CD4-positive, alpha-beta memory T cell (primary cell): ENCODE measurements at regions of chr12 and their contacts with region 1.

Region 1: GRCh38 chr12:6607751-6608591 is 792 bp upstream of the CHD4 start:
- DNase-seq: peak; percentile 74 to 90 (median 79)
- H3K4me3 ChIP-seq: no peak overlapping the region
- H3K4me3 Mint-ChIP-seq: no peak overlapping the region
- H3K27ac ChIP-seq: peak overlapping the region; percentile 84
- H3K27ac Mint-ChIP-seq: no peak overlapping the region
- H3K4me1 ChIP-seq: peaks cover 58% of the 10 kb centered on the region
- H3K4me1 Mint-ChIP-seq: peaks cover 41 to 55% (median 47%) of the 10 kb centered on the region in 4 donors
- H3K27me3 ChIP-seq: no peaks in the 10 kb centered on the region
- H3K27me3 Mint-ChIP-seq: no peaks in the 10 kb centered on the region

Region 2: DNA sequence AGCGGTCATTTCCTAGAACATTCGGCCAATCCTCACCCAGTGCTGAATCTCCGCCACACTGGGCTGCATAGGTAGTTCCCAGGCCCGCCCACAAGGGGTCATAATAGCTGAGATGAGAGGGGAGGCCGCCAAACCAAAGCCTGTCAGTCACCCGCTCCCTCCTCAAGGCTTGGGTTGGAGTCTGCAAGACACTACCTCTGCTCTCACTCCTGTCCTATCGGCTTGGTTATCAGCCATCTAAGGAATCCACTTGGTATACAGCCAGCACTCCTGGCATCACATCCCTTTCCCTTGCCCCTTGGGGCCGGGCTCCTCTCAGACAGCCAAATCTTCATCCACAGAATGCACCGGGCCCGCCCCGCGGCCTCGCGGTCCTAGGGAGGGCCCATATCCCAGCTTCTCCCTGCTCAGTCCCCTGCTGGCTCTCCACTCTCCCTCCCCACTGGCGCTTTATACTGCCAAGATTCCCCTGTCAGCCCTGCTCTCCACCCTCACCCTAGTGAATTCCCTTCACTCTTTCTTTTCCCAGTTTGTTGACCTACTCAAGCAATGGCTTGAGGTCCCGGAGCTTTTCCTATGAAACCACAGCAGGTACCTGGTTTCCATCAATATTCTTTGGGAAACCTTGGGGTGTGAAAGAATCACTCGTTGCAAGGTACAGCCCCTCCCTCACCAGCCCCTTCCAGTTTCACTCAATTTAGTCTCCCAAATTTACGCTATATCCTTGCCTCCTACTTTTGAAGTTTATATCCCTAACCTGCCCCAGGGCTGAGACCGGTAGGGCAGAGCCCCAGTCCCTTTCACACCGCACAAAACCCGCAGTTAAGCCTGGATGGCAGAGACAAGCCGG is 53.6 kb before region 1 on chr12:
- CTCF ChIA-PET with region 1: interaction called, 9 read pairs
- POLR2A ChIA-PET with region 1: interaction called, 7 read pairs
- intact Hi-C with region 1: loop called (anchors 1 kb)
- DNase-seq: peak; percentile 60 to 79 (median 63)
- H3K4me3 ChIP-seq: peak overlapping the region; percentile 71 to 73
- H3K4me3 Mint-ChIP-seq: peak overlapping the region; percentile 81 to 96 (median 88)
- H3K27ac ChIP-seq: peak overlapping the region; percentile 48
- H3K27ac Mint-ChIP-seq: peak overlapping the region; percentile 14 to 89 (median 70)
- H3K4me1 ChIP-seq: peaks cover 57% of the 10 kb centered on the region
- H3K4me1 Mint-ChIP-seq: peaks cover 28 to 64% (median 45%) of the 10 kb centered on the region in 4 donors
- H3K27me3 ChIP-seq: no peaks in the 10 kb centered on the region
- H3K27me3 Mint-ChIP-seq: no peaks in the 10 kb centered on the region

Region 3: DNA sequence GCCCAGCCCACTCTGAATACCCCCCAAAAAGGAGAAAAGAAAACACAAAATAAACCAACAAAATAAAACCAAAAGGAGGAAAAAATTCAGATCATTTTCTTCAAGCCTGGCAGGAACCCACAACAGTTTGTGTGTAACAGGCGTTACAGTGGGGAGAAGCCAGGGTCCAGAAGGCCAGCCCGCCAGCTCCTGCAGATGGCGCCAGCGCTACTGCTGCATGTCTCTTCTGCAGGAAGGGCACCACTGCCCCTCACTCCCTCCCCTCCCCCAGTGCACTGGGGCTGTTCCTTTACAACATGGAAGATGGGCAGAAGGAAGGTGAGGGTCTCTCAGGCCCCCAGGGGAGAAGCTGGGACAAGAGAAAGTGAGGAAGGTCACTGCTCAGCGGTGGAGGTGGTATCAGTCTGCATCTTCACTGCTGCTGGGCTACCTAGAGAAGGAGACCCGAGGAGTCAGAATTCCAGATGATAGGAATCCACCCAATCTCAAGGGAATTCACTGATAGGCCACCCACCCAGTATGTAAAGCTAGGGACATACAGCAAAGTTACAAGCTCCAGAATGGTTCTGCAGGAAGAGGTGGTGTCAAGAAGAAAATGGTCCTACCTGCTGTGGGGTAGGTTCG is 37.6 kb before region 1 on chr12:
- CTCF ChIA-PET with region 1: interaction called, 7 read pairs
- POLR2A ChIA-PET with region 1: interaction called, 14 read pairs
- intact Hi-C with region 1: loop called (anchors 2 kb)
- DNase-seq: peak in 3 of 5 donors; percentile 20 to 29 (median 25)
- H3K4me3 ChIP-seq: no peak overlapping the region
- H3K4me3 Mint-ChIP-seq: peak overlapping the region in 5 of 8 donors; percentile 10 to 100 (median 61)
- H3K27ac ChIP-seq: no peak overlapping the region
- H3K27ac Mint-ChIP-seq: peak overlapping the region; percentile 67 to 100 (median 75)
- H3K4me1 ChIP-seq: peaks cover 42% of the 10 kb centered on the region
- H3K4me1 Mint-ChIP-seq: peaks cover 17 to 51% (median 33%) of the 10 kb centered on the region in 4 donors
- H3K27me3 ChIP-seq: no peaks in the 10 kb centered on the region
- H3K27me3 Mint-ChIP-seq: no peaks in the 10 kb centered on the region

Region 4: GRCh38 chr12:6620137-6620884 is 12.3 kb after region 1 on chr12:
- CTCF ChIA-PET with region 1: interaction called, 9 read pairs
- POLR2A ChIA-PET with region 1: interaction called, 24 read pairs
- intact Hi-C with region 1: loop called (anchors 1 kb)
- DNase-seq: peak in 2 of 5 donors; percentile 36 to 49
- H3K4me3 ChIP-seq: peak overlapping the region in 1 of 2 donors; percentile 28
- H3K4me3 Mint-ChIP-seq: peak overlapping the region in 3 of 8 donors; percentile 54 to 78 (median 59)
- H3K27ac ChIP-seq: no peak overlapping the region
- H3K27ac Mint-ChIP-seq: peak overlapping the region in 1 of 7 donors; percentile 36
- H3K4me1 ChIP-seq: no peaks in the 10 kb centered on the region
- H3K4me1 Mint-ChIP-seq: peaks cover 3 to 24% (median 7%) of the 10 kb centered on the region in 4 donors
- H3K27me3 ChIP-seq: no peaks in the 10 kb centered on the region
- H3K27me3 Mint-ChIP-seq: no peaks in the 10 kb centered on the region

Region 5: GRCh38 chr12:6723607-6724396 is 115.8 kb after region 1 on chr12 and contains the start of gene COPS7A:
- CTCF ChIA-PET with region 1: interaction called, 3 read pairs
- POLR2A ChIA-PET with region 1: interaction called, 27 read pairs
- intact Hi-C with region 1: no loop called
- DNase-seq: peak; percentile 93 to 97 (median 96)
- H3K4me3 ChIP-seq: peak within 1 kb of the TSS; percentile 40 to 64
- H3K4me3 Mint-ChIP-seq: peak within 1 kb of the TSS; percentile 88 to 98 (median 94)
- H3K27ac ChIP-seq: peak within 1 kb of the TSS; percentile 68
- H3K27ac Mint-ChIP-seq: peak within 1 kb of the TSS; percentile 92 to 99 (median 98)
- H3K4me1 ChIP-seq: peaks cover 21% of the 10 kb centered on the region
- H3K4me1 Mint-ChIP-seq: peaks cover 15 to 31% (median 22%) of the 10 kb centered on the region in 4 donors
- H3K27me3 ChIP-seq: no peaks in the 10 kb centered on the region
- H3K27me3 Mint-ChIP-seq: no peaks in the 10 kb centered on the region
- total RNA-seq, gene COPS7A: 36.9 to 37.7 TPM